ENCODE measurements at regions of chr16 and their contacts with region 1.

Region 1: DNA sequence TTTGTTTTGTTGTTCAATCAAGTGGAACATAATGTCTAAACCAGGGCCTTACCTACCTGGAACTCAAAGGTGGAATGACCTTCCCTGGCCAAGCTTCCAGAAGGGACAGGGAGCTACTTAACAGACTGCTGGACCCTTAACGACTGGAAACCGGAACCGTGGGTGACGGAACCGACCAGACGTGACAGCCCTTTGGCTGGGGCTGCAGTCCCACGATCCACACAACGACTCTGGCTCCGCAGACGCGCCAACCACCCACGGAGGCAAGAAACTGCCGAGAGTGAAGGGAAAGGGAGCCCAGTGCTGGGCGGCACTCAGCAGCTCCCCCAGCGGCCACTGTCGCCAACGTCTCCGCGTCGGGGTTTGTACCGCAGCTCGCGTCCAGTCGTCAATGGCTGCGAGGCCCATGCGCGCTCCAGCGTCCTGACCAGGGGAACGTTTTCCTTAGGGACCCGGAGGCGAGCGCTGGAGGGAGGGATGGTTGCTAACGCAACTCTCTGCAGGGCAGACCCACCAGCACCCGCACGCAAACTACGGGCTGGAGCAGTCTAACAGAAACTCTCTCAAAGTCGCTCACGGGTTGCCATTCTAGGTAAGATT is 5.5 kb upstream of the KIF22 start:
- DNase-seq: peak; percentile 84
- H3K4me3 ChIP-seq: peak overlapping the region in 3 of 4 donors; percentile 27 to 33 (median 33)
- H3K27ac ChIP-seq: no peak overlapping the region
- H3K4me1 ChIP-seq: peaks cover 0 to 18% (median 6%) of the 10 kb centered on the region in 4 donors
- H3K27me3 ChIP-seq: no peaks in the 10 kb centered on the region
- CTCF ChIP-seq: peak; percentile 25 to 84 (median 65)
- EP300 ChIP-seq: no peak
- POLR2A ChIP-seq: no peak

Region 2: GRCh38 chr16:29720699-29721098 is 64.3 kb before region 1 on chr16:
- intact Hi-C with region 1: no loop called
- DNase-seq: no peak
- H3K4me3 ChIP-seq: no peak overlapping the region
- H3K27ac ChIP-seq: no peak overlapping the region
- H3K4me1 ChIP-seq: no peaks in the 10 kb centered on the region
- H3K27me3 ChIP-seq: no peaks in the 10 kb centered on the region
- CTCF ChIP-seq: no peak
- EP300 ChIP-seq: no peak
- POLR2A ChIP-seq: no peak

Region 3: GRCh38 chr16:29848420-29849297 is 63.7 kb after region 1 on chr16:
- intact Hi-C with region 1: loop called (anchors 10 kb)
- DNase-seq: peak; percentile 86
- H3K4me3 ChIP-seq: no peak overlapping the region
- H3K27ac ChIP-seq: peak overlapping the region in 3 of 4 donors; percentile 9 to 29 (median 23)
- H3K4me1 ChIP-seq: peaks cover 0 to 16% (median 1%) of the 10 kb centered on the region in 4 donors
- H3K27me3 ChIP-seq: no peaks in the 10 kb centered on the region
- CTCF ChIP-seq: peak; percentile 72 to 89 (median 83)
- EP300 ChIP-seq: no peak
- POLR2A ChIP-seq: no peak

Region 4: DNA sequence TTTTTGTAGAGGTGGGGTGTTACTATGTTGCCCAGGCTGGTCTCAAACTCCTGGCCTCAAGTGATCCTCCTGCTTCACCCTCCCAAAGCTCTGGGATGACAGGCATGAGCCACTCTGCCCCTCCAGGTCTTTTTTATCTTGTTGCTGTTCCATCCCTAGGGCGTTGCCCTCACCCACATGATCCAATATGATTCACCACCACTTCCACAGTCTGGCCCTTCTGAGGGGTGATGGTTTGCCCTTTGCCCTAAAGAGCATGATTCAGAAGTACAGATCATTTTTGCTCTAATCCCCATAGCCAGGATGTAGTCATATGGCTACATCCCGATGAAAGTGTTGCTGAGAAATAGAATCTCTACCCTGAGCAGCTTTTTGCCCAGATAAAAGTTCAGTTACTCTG is 1267.1 kb after region 1 on chr16:
- intact Hi-C with region 1: no loop called
- DNase-seq: no peak
- H3K4me3 ChIP-seq: no peak overlapping the region
- H3K27ac ChIP-seq: no peak overlapping the region
- H3K4me1 ChIP-seq: no peaks in the 10 kb centered on the region
- H3K27me3 ChIP-seq: no peaks in the 10 kb centered on the region
- CTCF ChIP-seq: no peak
- EP300 ChIP-seq: no peak
- POLR2A ChIP-seq: no peak

Measured in sigmoid colon (tissue), 7 donors.